Left lung (tissue), 14 donors: ENCODE measurements at regions of chr1 and their contacts with region 1.

Region 1: GRCh38 chr1:84620720-84621313 is 46.6 kb upstream of the CTBS start:
- DNase-seq: peak; percentile 65 to 96 (median 74)
- ATAC-seq: peak; percentile 99
- H3K4me3 ChIP-seq: peak overlapping the region; percentile 49 to 50
- H3K27ac ChIP-seq: peak overlapping the region in 1 of 2 donors; percentile 69
- H3K4me1 ChIP-seq: peaks cover 0 to 19% of the 10 kb centered on the region in 2 donors
- H3K27me3 ChIP-seq: no peaks in the 10 kb centered on the region
- CTCF ChIP-seq: peak; percentile 97 to 99

Region 2: DNA sequence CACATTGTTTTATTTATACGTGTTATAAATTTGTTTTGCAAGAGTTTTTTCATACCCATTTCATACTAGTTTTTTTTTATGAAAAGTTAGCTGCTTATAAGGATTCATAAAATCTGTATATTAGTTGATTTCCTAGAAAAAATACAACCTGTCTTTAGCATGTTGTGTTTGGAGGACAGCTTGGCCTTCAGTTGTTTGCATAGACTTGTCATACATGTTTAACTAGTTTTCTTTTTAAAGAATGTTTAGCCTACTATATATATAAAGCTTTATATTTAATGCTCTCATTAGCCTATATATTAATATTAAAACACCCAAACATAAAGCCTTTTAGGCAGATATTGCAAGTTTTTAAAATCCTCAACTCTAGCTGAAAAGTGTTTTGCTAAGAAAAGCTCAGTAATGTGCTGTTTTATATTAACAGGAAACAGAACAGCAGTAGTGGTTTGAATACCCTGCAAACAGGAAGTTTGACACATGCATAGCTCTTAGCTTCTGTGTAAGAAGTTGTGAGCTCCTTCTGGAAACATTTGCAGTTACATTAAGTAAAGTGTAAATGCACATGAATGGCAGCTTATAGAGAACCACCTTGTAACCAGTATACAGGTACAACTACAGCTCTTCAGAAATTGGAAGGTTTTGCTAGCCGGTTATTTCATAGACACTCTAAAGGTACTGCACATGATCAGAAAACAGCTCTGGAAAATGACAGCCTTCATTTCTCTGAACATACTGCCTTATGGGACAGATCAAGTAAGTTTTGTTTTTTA is 476.8 kb before region 1 on chr1 and contains the start of gene PRKACB:
- intact Hi-C with region 1: loop called in 1 of 2 experiments (anchors 10 kb)
- DNase-seq: no peak
- ATAC-seq: peak; percentile 85
- H3K4me3 ChIP-seq: peak within 1 kb of the TSS in 1 of 2 donors; percentile 13
- H3K27ac ChIP-seq: peak within 1 kb of the TSS; percentile 55 to 57
- H3K4me1 ChIP-seq: peaks cover 0 to 36% of the 10 kb centered on the region in 2 donors
- H3K27me3 ChIP-seq: no peaks in the 10 kb centered on the region
- CTCF ChIP-seq: no peak
- polyA plus RNA-seq, gene PRKACB: 43.5 to 54.9 (median 46.8) TPM

Region 3: DNA sequence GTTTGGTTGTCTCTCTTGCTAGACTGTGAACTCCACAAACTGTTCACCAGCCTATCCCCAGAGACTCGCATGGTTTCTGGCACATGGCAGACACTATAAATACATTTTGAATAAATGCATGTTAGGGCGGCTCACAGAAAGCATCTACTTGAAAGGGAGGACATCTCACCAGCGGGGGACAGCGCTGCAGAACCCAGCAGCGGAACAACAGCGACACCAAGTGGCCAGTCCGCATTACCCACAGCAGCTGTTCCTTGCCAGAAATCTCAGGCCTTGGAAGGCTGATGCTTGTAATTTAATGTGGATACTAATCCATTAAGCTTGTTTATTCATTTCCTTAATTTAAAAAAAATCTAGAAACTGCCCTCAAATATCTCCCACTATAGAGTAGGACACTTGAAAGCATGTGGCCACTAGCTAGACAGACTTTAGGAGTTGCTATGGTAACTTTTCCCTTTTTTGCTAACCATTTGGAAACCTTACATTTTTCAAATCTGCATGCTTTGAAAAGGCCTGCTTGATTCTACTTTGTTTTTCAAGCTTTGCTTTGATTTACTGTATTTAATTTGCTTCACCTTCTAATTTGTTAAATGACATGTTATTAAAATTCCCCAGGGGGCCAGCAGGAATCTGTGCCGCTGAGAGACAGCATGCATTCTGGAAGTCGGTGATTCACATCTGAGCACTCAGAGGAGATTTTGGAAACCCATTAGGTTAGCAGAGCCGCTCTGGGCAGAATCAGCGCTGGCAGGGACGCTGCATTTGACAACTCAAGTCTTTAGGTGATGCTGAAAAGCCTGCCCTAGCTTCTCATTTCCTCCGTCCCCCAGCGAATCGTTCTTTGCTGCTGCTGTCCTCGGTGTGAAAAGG is 132.9 kb after region 1 on chr1:
- intact Hi-C with region 1: loop called in 1 of 2 experiments (anchors 10 kb)
- DNase-seq: peak; percentile 59 to 91 (median 73)
- ATAC-seq: peak; percentile 94
- H3K4me3 ChIP-seq: no peak overlapping the region
- H3K27ac ChIP-seq: no peak overlapping the region
- H3K4me1 ChIP-seq: no peaks in the 10 kb centered on the region
- H3K27me3 ChIP-seq: peaks cover 0 to 12% of the 10 kb centered on the region in 2 donors
- CTCF ChIP-seq: peak; percentile 81 to 85